ENCODE measurements at regions of chr14 and their contacts with region 1.

Region 1: GRCh38 chr14:51564967-51565795 is 86.5 kb upstream of the FRMD6 start:
- DNase-seq: no peak

Region 2: GRCh38 chr14:51342241-51342691 is 222.9 kb before region 1 on chr14:
- CTCF ChIA-PET with region 1: no interaction called
- POLR2A ChIA-PET with region 1: no interaction called
- DNase-seq: no peak

Region 3: GRCh38 chr14:51453869-51454268 is 111.3 kb before region 1 on chr14:
- CTCF ChIA-PET with region 1: no interaction called
- POLR2A ChIA-PET with region 1: no interaction called
- DNase-seq: no peak

Region 4: GRCh38 chr14:51576879-51577278 is 11.7 kb after region 1 on chr14:
- CTCF ChIA-PET with region 1: interaction called, 10 read pairs
- POLR2A ChIA-PET with region 1: no interaction called
- DNase-seq: no peak

Measured in HEK293T (cell line).